HepG2 (cell line): ENCODE measurements at regions of chr16 and their contacts with region 1.

Region 1: DNA sequence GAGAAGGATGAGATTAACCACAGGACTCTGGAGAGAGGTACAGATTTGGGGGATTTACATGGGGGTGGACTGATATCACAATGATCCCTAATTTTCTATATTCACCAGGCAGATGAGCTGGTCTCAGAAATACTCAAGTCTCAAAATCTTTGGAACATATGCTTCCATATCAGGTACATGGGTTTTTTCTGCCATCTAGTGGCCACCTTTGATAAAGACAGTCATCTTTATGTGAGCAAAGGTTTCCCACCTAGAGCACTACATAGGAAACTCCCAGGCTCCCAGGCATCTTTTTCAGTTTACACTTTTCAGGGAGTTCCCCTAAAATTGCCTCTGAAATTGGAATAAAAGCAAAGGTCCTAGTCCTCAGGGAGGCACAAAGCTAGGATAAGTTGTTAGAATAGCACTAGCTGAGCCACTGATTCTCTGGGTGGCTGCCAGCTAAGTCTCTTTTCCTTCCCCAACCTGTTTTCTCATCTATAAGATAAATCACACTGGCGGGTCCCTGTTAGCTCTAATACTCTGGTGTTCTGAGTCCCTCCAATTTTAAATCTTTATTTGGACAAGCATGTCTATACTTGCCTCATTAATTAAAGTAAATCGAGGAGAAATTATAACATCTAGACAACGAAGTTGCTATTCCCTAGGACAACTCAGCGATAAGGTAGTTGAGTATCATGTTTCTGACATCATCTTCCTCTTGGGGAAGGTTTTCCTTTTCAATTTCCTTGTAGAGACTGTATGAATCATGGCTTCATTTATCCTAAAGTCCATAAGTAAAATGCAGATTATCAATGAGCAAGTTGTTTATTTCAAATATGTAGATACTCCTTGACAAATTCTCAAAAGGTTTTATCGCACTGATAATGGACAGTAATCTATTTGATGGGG is 19.0 kb upstream of the MON1B start:
- DNase-seq: peak; percentile 66
- ATAC-seq: peak; percentile 92
- H3K4me3 ChIP-seq: no peak overlapping the region
- H3K27ac ChIP-seq: no peak overlapping the region
- H3K4me1 ChIP-seq: no peaks in the 10 kb centered on the region
- H3K27me3 ChIP-seq: no peaks in the 10 kb centered on the region
- CTCF ChIP-seq: peak; percentile 84
- EP300 ChIP-seq: no peak
- POLR2A ChIP-seq: no peak
- RAD21 ChIP-seq: peak; percentile 30; the same call in 1 of the 2 replicates

Region 2: GRCh38 chr16:75789237-75789636 is 1382.8 kb before region 1 on chr16:
- CTCF ChIA-PET with region 1: interaction called, 37 read pairs
- POLR2A ChIA-PET with region 1: no interaction called
- in situ Hi-C with region 1: loop called (anchors 5 kb)
- intact Hi-C with region 1: loop called (anchors 1 kb)
- DNase-seq: peak; percentile 53
- ATAC-seq: peak; percentile 82
- H3K4me3 ChIP-seq: no peak overlapping the region
- H3K27ac ChIP-seq: no peak overlapping the region
- H3K4me1 ChIP-seq: no peaks in the 10 kb centered on the region
- H3K27me3 ChIP-seq: no peaks in the 10 kb centered on the region
- CTCF ChIP-seq: peak; percentile 84
- EP300 ChIP-seq: no peak
- POLR2A ChIP-seq: no peak
- RAD21 ChIP-seq: peak; percentile 52; the same call in 1 of the 2 replicates

Region 3: DNA sequence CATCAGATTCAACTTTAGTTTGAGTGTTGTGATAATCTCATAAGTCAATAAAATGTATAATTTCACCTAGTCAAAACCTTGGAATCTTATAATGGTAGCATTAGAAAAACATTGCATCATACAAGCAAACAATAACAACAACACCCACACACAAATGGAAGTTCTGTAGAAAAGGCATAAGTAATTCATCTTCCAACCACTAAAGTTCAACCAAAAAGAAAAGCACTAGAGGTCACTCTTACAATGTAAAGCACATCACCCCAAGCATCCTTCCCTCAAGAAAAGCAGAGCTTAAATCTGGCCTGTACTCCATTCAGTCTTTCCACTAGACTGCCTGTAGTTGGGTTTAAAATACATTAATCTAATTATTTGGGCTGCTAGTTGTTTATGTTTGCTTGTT is 893.0 kb before region 1 on chr16:
- CTCF ChIA-PET with region 1: interaction called, 4 read pairs
- POLR2A ChIA-PET with region 1: no interaction called
- in situ Hi-C with region 1: loop called (anchors 25 kb)
- intact Hi-C with region 1: loop called (anchors 1 kb)
- DNase-seq: peak; percentile 13
- ATAC-seq: peak; percentile 79
- H3K4me3 ChIP-seq: no peak overlapping the region
- H3K27ac ChIP-seq: no peak overlapping the region
- H3K4me1 ChIP-seq: no peaks in the 10 kb centered on the region
- H3K27me3 ChIP-seq: no peaks in the 10 kb centered on the region
- CTCF ChIP-seq: peak; percentile 59
- EP300 ChIP-seq: no peak
- POLR2A ChIP-seq: no peak
- RAD21 ChIP-seq: 0 out of 2 replicates have a peak, but pooled peaks have one; percentile 32

Region 4: DNA sequence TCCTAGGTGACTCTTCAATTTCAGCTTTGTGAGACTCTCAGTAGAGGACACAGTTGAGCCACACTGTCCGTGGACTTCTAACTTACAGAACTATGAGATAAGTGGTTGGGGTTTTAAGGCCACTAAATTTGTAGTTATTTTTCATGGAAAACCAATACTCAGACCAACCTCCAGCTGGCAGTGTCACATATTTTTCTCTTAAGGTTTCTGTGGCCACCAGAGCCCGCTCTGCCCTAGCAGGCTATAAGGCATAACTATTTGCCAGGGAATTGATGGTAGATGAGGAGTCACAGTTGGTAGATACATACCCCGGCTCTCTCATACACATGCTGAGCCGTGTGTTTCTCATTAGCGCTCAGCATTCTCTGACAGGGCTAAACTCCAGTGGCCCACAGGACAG is 317.8 kb before region 1 on chr16:
- CTCF ChIA-PET with region 1: no interaction called
- POLR2A ChIA-PET with region 1: no interaction called
- in situ Hi-C with region 1: no loop called
- intact Hi-C with region 1: loop called (anchors 5 kb)
- DNase-seq: peak; percentile 4
- ATAC-seq: peak; percentile 78
- H3K4me3 ChIP-seq: no peak overlapping the region
- H3K27ac ChIP-seq: no peak overlapping the region
- H3K4me1 ChIP-seq: no peaks in the 10 kb centered on the region
- H3K27me3 ChIP-seq: no peaks in the 10 kb centered on the region
- CTCF ChIP-seq: peak; percentile 15; the same call in 1 of the 2 replicates
- EP300 ChIP-seq: no peak
- POLR2A ChIP-seq: no peak
- RAD21 ChIP-seq: no peak

Region 5: DNA sequence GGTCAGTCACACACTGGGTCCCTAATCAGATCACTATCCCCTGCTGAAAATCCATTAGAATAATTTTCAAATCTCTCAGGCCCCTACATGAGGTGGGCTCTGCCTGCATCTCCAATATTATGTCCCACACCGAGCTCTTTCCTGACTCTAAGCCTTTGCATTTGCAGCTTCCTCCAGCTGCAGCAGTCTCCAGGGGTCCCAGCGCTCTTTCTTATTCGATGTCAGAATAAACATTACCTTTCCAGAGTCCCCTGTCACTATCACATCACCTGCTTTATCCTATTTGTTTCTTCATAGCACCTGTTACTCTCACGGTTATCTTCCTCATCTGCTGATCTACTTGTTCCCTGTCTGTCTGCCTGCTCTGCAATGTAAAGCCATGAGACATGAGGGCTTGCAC is 38.3 kb before region 1 on chr16:
- CTCF ChIA-PET with region 1: no interaction called
- POLR2A ChIA-PET with region 1: no interaction called
- in situ Hi-C with region 1: no loop called
- intact Hi-C with region 1: loop called (anchors 1 kb)
- DNase-seq: no peak
- ATAC-seq: no peak
- H3K4me3 ChIP-seq: no peak overlapping the region
- H3K27ac ChIP-seq: no peak overlapping the region
- H3K4me1 ChIP-seq: no peaks in the 10 kb centered on the region
- H3K27me3 ChIP-seq: no peaks in the 10 kb centered on the region
- CTCF ChIP-seq: no peak
- EP300 ChIP-seq: no peak
- POLR2A ChIP-seq: no peak
- RAD21 ChIP-seq: no peak